IMR-90 (cell line): ENCODE measurements at regions of chr11 and their contacts with region 1.

Region 1: GRCh38 chr11:132941024-132941646 is 591.2 kb downstream of the OPCML start:
- DNase-seq: peak; percentile 43
- ATAC-seq: peak; percentile 45; the same call in 1 of the 2 replicates
- H3K4me3 ChIP-seq: no peak overlapping the region
- H3K27ac ChIP-seq: no peak overlapping the region
- H3K4me1 ChIP-seq: peaks cover 2% of the 10 kb centered on the region; the same call in 1 of the 2 replicates
- H3K27me3 ChIP-seq: peaks cover 26% of the 10 kb centered on the region
- CTCF ChIP-seq: peak; percentile 81
- POLR2A ChIP-seq: no peak
- RAD21 ChIP-seq: peak; percentile 78

Region 2: DNA sequence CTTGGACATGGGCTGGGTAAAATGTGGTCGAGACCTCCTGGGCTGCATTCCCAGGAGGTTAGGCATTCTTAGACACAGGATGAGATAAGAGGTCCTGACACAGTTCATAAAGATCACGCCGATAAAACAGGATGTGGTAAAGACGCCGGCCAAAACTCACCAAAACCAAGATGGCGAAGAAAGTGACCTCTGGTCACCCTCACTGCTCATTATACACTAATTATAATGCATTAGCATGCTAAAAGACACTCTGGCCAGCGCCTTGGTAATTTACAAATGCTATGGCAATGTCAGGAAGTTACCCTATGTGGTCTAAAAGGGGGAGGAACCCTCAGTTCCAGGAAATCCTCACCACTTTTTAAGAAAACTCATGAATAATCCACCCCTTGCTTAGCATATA is 392.1 kb before region 1 on chr11:
- CTCF ChIA-PET with region 1: no interaction called
- POLR2A ChIA-PET with region 1: no interaction called
- dilution Hi-C with region 1: no loop called
- in situ Hi-C with region 1: no loop called
- intact Hi-C with region 1: no loop called
- DNase-seq: no peak
- ATAC-seq: no peak
- H3K4me3 ChIP-seq: no peak overlapping the region
- H3K27ac ChIP-seq: no peak overlapping the region
- H3K4me1 ChIP-seq: no peaks in the 10 kb centered on the region
- H3K27me3 ChIP-seq: no peaks in the 10 kb centered on the region
- CTCF ChIP-seq: no peak
- POLR2A ChIP-seq: no peak
- RAD21 ChIP-seq: no peak

Region 3: GRCh38 chr11:132803436-132803835 is 137.7 kb before region 1 on chr11:
- CTCF ChIA-PET with region 1: no interaction called
- POLR2A ChIA-PET with region 1: interaction called, 3 read pairs
- dilution Hi-C with region 1: no loop called
- in situ Hi-C with region 1: no loop called
- intact Hi-C with region 1: loop called (anchors 5 kb)
- DNase-seq: peak; percentile 32
- ATAC-seq: no peak
- H3K4me3 ChIP-seq: no peak overlapping the region
- H3K27ac ChIP-seq: no peak overlapping the region
- H3K4me1 ChIP-seq: no peaks in the 10 kb centered on the region
- H3K27me3 ChIP-seq: no peaks in the 10 kb centered on the region
- CTCF ChIP-seq: no peak
- POLR2A ChIP-seq: no peak
- RAD21 ChIP-seq: no peak

Region 4: GRCh38 chr11:132866783-132867545 is 74.2 kb before region 1 on chr11:
- CTCF ChIA-PET with region 1: no interaction called
- POLR2A ChIA-PET with region 1: no interaction called
- dilution Hi-C with region 1: no loop called
- in situ Hi-C with region 1: no loop called
- intact Hi-C with region 1: loop called (anchors 5 kb)
- DNase-seq: peak; percentile 37
- ATAC-seq: no peak
- H3K4me3 ChIP-seq: no peak overlapping the region
- H3K27ac ChIP-seq: no peak overlapping the region
- H3K4me1 ChIP-seq: no peaks in the 10 kb centered on the region
- H3K27me3 ChIP-seq: no peaks in the 10 kb centered on the region; the same call in 1 of the 2 replicates
- CTCF ChIP-seq: no peak
- POLR2A ChIP-seq: no peak
- RAD21 ChIP-seq: no peak

Region 5: DNA sequence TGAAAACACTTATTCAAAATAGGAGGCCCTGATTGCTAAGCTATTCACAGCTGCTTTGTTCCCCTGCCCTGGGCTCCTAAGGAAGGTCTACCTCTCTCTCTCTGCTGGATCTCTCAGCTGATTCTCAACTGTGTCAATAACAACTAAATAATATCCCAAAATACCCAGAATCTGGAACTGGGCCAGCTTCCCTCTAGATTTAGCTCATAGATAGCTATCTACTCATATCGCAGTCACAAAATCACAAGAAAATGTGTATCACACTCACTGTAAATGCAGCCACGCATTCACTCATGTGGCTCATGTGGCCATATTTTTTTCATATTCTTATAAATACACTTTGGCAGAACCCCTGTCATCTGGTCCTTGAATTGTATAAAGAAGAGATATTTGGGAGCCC is 36.1 kb after region 1 on chr11:
- CTCF ChIA-PET with region 1: interaction called, 10 read pairs
- POLR2A ChIA-PET with region 1: interaction called, 3 read pairs
- dilution Hi-C with region 1: no loop called
- in situ Hi-C with region 1: no loop called
- intact Hi-C with region 1: no loop called
- DNase-seq: no peak
- ATAC-seq: no peak
- H3K4me3 ChIP-seq: no peak overlapping the region
- H3K27ac ChIP-seq: no peak overlapping the region
- H3K4me1 ChIP-seq: no peaks in the 10 kb centered on the region
- H3K27me3 ChIP-seq: no peaks in the 10 kb centered on the region
- CTCF ChIP-seq: no peak
- POLR2A ChIP-seq: no peak
- RAD21 ChIP-seq: no peak

Region 6: GRCh38 chr11:133029107-133029506 is 88.0 kb after region 1 on chr11:
- CTCF ChIA-PET with region 1: no interaction called
- POLR2A ChIA-PET with region 1: no interaction called
- dilution Hi-C with region 1: no loop called
- in situ Hi-C with region 1: no loop called
- intact Hi-C with region 1: no loop called
- DNase-seq: no peak
- ATAC-seq: no peak
- H3K4me3 ChIP-seq: no peak overlapping the region
- H3K27ac ChIP-seq: no peak overlapping the region
- H3K4me1 ChIP-seq: no peaks in the 10 kb centered on the region
- H3K27me3 ChIP-seq: no peaks in the 10 kb centered on the region
- CTCF ChIP-seq: no peak
- POLR2A ChIP-seq: no peak
- RAD21 ChIP-seq: no peak